ENCODE measurements at regions of chr1 and their contacts with region 1.

Region 1: GRCh38 chr1:145858894-145859490 is at the start of gene PIAS3:
- DNase-seq: peak; percentile 98

Region 2: DNA sequence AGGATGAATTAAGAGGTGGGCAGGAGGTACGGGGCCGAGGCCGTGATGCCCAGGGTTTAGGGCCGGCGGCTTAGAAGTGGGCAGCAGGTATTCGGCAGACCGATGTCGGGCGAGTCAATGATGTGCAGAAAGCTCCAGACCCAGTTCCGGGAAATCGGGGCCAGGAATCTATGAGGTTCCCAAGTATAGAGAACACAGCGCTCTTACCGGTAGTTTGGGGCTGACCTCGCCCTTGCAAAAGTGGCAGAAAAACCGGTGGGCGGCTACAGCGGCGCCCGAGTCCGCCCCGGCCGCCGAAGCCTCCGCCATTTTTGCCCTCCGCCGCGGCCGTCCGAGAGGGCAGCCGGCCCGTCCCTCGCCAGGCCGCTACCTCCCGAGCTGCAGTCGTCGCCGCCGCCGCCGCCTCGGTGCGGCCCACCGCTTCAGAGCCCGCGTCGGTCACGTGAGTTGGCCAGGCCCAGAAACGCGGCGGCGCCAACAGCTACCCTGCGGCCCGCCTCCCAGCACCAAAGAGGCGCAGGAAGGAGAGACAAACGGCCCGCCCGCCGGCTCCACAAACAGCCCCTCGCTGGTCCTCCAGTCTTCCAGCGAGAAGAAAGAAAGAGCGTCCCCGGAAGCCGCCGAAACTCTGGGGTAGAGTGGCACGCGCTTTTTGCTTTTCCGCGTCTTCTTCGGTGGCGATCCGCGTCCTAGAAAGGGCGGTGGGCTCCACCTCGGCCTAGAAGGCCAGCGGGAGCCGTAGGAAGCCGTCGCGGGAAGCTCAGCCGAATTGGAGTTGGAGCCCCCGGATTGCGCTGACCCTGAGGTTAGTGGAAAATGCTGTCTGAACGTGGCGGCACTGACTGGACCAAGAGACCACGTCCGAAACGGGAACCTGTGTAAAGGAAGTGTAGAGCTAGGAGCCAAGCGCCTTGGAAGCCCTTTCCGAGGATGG is 35.2 kb before region 1 on chr1 and contains the starts of genes POLR3C and RNF115:
- CTCF ChIA-PET with region 1: no interaction called
- POLR2A ChIA-PET with region 1: interaction called, 27 read pairs
- DNase-seq: peak; percentile 91

Region 3: GRCh38 chr1:145871994-145872924 is 13.3 kb after region 1 on chr1:
- CTCF ChIA-PET with region 1: interaction called, 6 read pairs
- POLR2A ChIA-PET with region 1: interaction called, 21 read pairs
- DNase-seq: no peak

Region 4: GRCh38 chr1:145885738-145886287 is 26.8 kb after region 1 on chr1 and contains the start of gene ANKRD35:
- CTCF ChIA-PET with region 1: interaction called, 3 read pairs
- POLR2A ChIA-PET with region 1: interaction called, 25 read pairs
- DNase-seq: peak; percentile 95

Region 5: DNA sequence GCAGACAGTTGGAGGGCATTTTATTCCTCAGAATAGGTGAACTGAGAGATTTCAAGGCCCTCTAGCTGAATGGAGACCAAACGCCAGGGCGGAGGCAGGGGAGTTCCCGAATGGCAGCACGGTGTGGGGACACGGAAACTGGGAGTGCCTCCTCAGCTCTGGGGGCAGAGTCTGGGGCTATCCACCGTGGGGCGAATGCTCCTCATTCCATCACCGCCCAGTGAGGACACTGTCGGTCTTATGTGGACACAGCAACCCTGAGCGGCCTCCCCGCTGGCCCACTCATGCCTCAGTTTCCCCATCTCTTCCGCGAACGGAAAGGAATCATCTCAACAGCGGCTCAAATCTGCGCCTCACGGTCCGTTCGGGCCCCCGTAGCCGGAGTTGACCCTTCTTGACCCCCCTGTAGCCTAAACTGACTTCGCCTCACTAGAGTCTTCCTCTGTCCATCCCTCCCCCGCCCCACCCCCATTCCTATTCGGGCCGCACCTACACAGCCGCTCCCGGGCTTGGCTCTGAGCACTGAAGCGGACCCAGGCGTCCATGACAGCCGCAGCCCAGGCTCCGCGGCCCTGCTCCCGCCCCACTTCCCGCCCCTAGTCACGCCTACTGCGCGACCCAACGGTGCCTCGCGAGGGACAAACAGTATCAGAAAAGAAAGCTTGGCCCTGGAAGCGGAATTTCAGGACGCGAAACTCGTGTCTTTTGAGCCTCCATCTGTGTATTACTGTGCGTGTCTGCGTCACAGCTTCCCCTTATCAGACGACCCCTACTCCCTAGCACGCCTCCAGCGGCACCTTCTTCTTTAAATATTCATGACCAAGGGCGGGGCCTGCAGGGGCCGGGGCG is 59.4 kb after region 1 on chr1 and contains the start of gene PEX11B:
- CTCF ChIA-PET with region 1: no interaction called
- POLR2A ChIA-PET with region 1: interaction called, 10 read pairs
- DNase-seq: peak; percentile 89

Region 6: DNA sequence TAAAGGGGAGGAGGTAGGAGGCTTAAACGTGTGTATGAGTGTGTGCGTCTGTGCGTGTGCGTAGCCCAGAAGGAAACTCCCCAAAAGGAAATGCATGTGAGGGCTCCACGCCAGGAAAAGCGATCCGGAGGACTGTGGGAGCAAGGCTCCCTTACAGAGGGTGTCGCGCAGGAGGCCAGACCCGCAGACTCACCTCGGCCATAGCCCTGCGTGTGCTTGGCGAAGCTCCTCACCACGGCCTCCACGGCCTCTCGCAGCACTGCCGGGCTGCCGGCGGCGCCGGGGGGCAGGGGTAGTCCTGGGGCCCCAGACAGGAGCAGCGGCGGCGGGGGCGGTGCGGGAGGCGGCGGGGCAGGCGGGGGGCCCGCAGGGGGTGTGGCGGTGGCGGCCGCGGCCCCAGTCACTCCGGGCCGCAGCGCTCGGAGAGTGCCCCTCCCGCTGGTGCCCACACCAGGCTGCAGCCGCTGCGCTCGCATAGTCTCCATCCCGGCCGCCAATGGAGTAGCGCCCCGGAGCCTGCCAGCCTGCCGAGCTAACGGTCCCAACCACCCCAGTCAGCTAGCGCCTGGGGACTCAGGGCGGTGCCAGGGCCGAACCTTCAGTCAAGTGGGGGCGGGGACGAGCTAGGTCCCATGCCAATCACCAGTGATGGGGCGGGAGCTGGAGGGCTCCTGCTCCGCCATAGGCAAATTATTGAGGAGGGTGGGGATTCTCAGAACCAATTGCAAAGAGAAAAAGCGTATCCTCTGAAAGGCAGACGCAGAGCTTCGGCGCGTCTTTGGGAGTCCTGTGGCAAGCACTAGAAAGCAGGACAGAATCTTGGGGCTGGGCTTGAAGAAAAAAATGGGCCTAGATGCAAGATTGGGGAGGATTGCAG is 98.7 kb after region 1 on chr1 and contains the start of gene LIX1L:
- CTCF ChIA-PET with region 1: no interaction called
- POLR2A ChIA-PET with region 1: interaction called, 16 read pairs
- DNase-seq: peak; percentile 95

Region 7: GRCh38 chr1:146036965-146037646 is 178.1 kb after region 1 on chr1:
- CTCF ChIA-PET with region 1: no interaction called
- POLR2A ChIA-PET with region 1: interaction called, 11 read pairs
- DNase-seq: peak; percentile 47

Measured in HEK293T (cell line).